Right ventricle myocardium inferior (tissue), 1 donor: ENCODE measurements at regions of chr9 and their contacts with region 1.

Region 1: DNA sequence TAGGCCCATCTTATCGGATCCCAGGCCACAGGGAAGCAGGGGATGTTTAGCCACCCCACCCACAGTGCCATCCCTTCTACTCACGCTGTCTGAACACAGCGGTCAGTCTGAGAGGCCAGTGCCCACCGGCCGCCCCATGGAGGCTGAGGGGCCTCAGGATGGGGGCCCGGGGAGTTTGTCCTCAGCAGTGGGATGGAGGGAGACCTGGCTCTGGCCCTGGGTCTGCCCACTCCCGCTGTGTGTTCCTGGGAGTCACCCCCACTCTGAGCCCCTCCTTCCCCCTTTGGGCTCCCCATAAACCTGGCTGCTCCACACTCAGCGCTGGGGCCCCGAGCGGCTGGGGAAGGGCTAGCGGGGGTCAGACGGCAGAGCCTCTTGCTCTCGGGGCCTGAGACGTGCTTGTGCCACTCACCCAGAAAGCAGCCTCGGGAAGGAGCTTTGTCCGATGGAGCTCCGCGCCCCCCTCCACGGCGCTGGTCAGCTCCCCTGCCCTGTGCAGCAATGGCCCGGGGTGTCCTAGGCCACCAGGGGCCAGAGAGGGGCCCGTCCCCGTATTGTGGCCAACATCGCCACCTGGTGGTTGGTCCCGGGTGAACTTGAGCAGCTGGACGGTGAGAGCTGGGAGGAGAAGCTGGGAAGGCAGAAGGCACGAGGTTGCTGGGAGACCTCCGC is 10.9 kb upstream of the LAMC3 start:
- DNase-seq: no peak
- ATAC-seq: peak; percentile 66

Region 2: DNA sequence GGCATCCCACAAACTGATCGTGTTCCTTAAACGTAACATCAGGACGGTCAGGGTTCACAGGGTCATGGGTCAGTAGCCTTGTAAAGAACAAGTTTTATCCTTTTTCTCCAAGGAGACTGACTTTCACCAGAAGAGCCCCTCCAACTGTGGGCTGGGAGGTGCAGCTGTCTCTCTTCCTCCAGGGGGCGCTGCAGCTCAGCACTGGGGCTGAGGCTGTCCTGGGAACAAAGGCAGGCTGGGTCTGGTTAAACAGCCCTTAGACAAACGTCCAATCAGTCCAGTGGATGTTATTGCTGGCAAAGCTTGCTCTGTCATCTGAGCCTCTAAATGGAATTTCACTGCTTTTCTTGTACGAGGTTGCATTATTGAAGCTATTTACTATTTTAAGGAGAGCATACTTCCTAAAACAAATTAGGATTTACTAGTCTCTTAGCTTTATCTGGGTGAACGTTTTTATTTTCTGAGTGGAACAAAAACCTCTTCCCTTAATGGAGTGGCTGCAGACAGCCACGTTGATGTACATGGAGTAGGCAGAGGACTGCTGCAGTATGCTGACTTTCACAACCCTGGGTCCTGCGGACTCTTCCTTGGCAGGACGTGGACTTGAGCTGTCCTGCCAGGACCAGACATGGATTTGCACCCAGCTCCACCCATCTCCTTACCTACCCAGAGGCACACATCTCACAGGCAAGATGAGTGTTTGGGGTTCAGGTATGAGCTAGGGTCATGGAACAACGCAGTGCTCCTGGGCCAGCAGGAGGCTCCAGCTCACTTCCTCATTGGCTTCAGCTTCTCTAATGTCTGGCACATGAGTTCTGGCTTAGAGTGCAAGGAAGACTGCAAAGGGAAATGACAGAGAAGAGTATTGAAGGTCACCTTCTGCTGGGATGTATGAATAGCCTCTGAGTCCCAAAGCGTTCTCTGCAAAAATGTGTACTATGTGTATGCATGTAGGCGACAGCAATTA is 296.7 kb before region 1 on chr9:
- intact Hi-C with region 1: loop called (anchors 2 kb)
- DNase-seq: peak; percentile 86
- ATAC-seq: peak; percentile 86

Region 3: DNA sequence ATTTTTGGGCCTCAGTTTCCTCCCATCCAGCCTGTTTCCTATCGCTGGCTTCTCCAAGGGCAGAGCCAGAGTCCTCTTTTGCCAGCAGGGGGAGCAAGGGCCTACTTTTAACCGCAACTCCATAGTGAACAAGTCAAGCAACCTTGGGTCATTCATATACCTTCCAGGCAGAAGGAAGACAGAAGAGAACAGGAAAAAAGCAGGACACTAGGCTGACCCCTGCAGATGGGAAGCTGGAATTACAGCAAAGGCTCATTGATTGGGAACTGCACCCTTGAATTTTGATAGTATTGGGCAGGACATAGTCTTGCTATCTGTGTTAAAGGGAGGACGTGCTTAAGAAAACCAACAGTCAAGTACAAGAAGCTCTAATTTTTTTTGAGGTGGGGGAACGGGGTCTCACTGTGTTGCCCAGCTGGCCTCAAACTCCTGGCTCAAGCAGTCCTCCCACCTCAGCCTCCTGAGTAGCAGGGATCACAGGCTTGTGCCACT is 131.5 kb before region 1 on chr9:
- intact Hi-C with region 1: loop called (anchors 2 kb)
- DNase-seq: peak; percentile 44
- ATAC-seq: no peak

Region 4: DNA sequence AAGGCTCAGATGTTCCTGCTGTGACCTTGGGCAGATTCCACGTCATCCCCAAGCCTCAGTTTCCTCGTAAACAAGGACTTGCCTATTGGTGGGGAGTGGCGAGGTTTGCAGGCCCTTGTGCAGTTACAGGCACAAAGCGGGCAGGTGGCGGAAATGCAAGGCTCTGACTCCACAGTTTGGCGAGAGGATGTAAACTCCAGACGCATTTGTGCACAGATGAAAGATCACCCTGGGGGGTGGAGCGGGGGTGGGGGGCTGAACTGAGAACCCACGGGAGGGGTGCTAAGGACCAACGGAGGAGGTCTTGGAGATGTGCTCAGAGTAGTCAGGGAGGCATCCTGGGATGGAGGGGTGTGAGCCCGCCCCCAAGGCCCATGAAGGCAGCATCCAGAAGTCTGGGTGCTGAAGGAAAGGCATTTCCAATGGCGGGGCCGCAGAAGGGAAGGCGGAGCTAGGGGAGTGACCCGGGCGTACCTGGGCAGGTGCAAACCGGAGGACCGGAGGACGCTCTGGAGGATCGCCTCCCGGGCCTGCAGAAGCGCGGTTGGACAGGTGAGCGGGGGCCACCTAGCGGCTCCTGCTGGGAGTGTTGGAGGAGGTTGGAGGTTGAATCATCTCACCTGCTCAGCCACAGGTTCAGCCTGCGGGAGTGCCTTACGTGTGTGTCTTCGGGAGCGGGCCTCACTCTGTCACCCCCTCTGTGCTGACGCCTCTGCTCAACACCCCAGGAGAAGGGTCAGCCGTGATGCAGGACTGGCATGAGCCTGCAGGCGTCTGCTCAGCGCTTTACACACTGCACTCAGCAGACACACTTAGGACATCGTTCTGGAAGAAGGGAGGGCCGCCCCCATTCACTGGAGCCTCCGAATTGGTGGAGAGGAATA is 57.1 kb before region 1 on chr9:
- intact Hi-C with region 1: loop called (anchors 5 kb)
- DNase-seq: peak; percentile 83
- ATAC-seq: peak; percentile 64